Dendritic cell treated with granulocyte-macrophage colony-stimulating factor and Interleukin-4, amounts not matched to agents 40 ng/mL and 50 ng/mL, for 4 days (primary cell): ENCODE measurements at regions of chr1 and their contacts with region 1.

Region 1: GRCh38 chr1:203273206-203273868 is 32.0 kb upstream of the BTG2 start:
- H3K4me3 Mint-ChIP-seq: peak overlapping the region; percentile 79
- H3K27ac Mint-ChIP-seq: peak overlapping the region; percentile 94
- H3K4me1 Mint-ChIP-seq: peaks cover 80% of the 10 kb centered on the region
- H3K27me3 Mint-ChIP-seq: no peaks in the 10 kb centered on the region

Region 2: DNA sequence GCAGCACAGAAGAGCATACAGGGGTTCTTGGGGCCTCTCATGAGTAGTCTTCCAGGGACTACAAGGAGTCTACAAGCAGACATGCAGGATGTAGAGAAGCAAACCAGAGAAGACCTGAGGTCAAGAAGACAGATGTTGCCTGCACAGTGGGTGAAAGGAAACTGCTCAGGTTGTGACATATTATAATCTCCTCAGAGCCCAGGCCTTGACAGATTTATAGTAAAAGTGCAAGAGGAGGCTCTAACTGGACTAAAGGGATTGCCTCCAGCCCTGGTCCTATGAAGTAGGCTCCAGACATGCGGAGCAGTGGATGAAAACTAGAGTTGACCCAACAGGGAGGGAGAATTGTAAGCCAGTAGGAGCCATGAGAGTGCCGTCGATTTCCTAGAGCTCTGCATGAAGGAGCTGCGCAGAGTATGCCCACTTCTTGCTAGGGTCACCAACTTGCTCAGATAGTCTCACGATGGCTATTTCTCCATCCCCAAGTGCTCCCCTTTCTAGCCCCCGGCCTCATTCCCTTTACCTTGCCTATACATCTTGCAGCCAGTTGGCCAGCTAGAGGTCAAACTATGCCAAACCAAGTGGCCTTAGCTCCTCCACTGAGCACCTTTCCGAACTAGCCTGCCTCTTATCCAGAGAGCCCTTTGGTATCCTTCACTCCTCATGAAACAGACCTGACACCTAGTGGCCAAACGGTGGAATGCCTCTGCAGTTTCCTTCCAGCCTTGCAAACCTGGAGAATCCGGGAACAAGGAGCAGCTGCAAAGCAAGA is 1480.6 kb before region 1 on chr1:
- intact Hi-C with region 1: no loop called
- H3K4me3 Mint-ChIP-seq: no peak overlapping the region
- H3K27ac Mint-ChIP-seq: peak overlapping the region; percentile 68
- H3K4me1 Mint-ChIP-seq: peaks cover 36% of the 10 kb centered on the region
- H3K27me3 Mint-ChIP-seq: no peaks in the 10 kb centered on the region

Region 3: DNA sequence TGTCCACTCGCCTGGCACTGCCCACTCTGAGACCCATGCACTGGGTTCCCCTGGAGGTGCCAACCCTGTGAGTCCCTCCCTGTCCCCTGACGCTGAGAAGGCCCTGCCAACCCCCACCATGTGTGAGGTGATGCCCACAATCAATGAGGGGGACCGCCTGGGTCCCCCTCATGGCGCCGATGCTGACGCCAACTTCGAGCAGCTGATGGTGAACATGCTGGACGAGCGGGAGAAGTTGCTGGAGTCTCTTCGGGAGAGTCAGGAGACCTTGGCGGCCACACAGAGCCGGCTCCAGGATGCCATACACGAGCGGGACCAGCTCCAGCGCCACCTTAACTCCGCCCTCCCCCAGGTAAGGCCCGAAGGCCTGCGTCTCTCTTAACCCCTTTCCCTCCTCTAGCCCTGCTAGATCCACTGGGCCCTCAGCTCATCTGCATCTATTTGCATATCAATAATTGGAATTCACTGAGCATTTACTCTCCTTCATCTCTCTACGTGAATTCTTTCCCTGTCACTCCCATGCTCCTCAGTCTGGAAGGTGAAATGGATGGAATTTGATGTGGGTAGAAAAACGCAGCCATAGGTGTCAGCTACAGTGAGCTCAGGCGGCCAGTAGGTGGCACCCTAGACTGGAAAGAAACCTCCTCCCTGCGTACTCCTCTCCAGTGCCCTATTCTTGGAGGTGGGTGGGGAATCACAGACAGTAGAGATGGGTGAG is 234.3 kb before region 1 on chr1:
- intact Hi-C with region 1: loop called (anchors 1 kb)
- H3K4me3 Mint-ChIP-seq: no peak overlapping the region
- H3K27ac Mint-ChIP-seq: no peak overlapping the region
- H3K4me1 Mint-ChIP-seq: peaks cover 24% of the 10 kb centered on the region
- H3K27me3 Mint-ChIP-seq: peaks cover 43% of the 10 kb centered on the region

Region 4: GRCh38 chr1:203287109-203287893 is 14.0 kb after region 1 on chr1:
- intact Hi-C with region 1: loop called (anchors 1 kb)
- H3K4me3 Mint-ChIP-seq: peak overlapping the region; percentile 55
- H3K27ac Mint-ChIP-seq: peak overlapping the region; percentile 90
- H3K4me1 Mint-ChIP-seq: peaks cover 88% of the 10 kb centered on the region
- H3K27me3 Mint-ChIP-seq: no peaks in the 10 kb centered on the region

Region 5: DNA sequence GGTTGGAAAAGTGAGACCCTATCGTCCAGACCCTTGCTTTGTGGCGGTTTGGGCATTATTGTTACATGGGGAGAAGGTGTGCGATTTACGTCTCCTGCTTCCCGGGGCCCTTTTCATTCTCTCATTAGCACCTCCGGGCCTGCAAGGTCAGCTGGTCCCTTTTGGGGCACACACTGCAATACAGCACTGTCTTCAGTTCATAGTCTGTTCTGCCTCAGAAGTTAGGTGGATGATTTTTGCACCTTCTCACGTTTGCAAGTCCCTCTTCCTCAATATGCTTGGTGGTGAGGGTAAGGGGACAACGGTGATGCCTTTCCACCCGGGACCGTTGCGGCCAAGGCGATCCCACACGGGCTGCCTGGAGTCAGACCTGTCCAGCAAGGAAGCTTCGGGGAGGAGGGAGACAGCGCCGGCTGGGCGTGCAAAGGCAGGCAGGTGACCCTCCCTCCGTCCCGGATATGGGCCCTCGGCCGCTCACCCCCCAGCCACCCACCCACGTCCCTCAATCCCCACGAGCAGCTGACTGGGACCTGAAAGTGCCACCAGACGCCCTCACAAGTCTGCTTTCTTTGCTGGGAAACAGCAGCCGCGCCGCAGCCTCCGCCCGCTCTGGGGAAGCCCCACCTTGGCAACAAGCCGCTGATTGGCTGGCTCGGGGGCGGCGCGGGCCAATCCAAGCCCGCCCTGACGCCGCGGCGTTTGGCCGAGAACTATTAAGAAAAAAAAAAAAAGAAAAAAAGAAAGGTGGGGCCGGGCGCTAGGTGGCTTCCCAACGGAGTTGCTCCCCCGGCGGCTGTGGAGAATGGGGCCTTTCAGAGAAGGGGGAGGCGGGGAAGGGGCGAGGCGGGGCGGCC is 53.7 kb after region 1 on chr1:
- intact Hi-C with region 1: loop called (anchors 1 kb)
- H3K4me3 Mint-ChIP-seq: peak overlapping the region; percentile 71
- H3K27ac Mint-ChIP-seq: peak overlapping the region; percentile 95
- H3K4me1 Mint-ChIP-seq: peaks cover 81% of the 10 kb centered on the region
- H3K27me3 Mint-ChIP-seq: no peaks in the 10 kb centered on the region

Region 6: GRCh38 chr1:203486618-203487370 is 213.5 kb after region 1 on chr1:
- intact Hi-C with region 1: loop called (anchors 2 kb)
- H3K4me3 Mint-ChIP-seq: peak overlapping the region; percentile 73
- H3K27ac Mint-ChIP-seq: no peak overlapping the region
- H3K4me1 Mint-ChIP-seq: peaks cover 18% of the 10 kb centered on the region
- H3K27me3 Mint-ChIP-seq: peaks cover 7% of the 10 kb centered on the region